ENCODE measurements at regions of chr3 and their contacts with region 1.

Region 1: GRCh38 chr3:174125267-174125824 is 727.8 kb downstream of the NLGN1 start:
- DNase-seq: peak; percentile 61
- H3K4me3 ChIP-seq: no peak overlapping the region
- H3K27ac ChIP-seq: no peak overlapping the region
- H3K4me1 ChIP-seq: peaks cover 10% of the 10 kb centered on the region
- H3K27me3 ChIP-seq: no peaks in the 10 kb centered on the region
- CTCF ChIP-seq: peak; percentile 80

Region 2: GRCh38 chr3:173253471-173253870 is 871.9 kb before region 1 on chr3:
- CTCF ChIA-PET with region 1: no interaction called
- POLR2A ChIA-PET with region 1: no interaction called
- intact Hi-C with region 1: no loop called
- DNase-seq: no peak
- H3K4me3 ChIP-seq: no peak overlapping the region
- H3K27ac ChIP-seq: no peak overlapping the region
- H3K4me1 ChIP-seq: peaks cover 20% of the 10 kb centered on the region
- H3K27me3 ChIP-seq: no peaks in the 10 kb centered on the region
- CTCF ChIP-seq: no peak

Region 3: DNA sequence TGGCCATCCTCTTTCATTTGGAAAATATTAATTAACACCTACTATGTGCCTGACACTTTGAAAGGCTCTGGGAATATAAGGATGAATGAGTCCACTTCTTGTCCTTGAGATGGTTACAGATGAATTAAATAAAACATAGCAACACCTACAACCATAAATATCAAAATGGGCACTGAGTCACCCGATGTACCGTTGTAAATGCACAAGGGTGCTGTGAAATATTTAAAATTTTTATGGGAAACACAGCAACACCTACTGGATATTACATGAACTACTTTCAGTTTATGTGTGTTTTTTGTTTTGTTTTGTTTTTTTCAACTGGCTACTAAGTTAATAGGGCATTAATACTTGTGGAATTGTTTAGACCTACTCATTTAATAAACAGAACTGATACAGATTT is 494.8 kb after region 1 on chr3:
- CTCF ChIA-PET with region 1: no interaction called
- POLR2A ChIA-PET with region 1: no interaction called
- intact Hi-C with region 1: loop called (anchors 10 kb)
- DNase-seq: peak; percentile 33
- H3K4me3 ChIP-seq: no peak overlapping the region
- H3K27ac ChIP-seq: no peak overlapping the region
- H3K4me1 ChIP-seq: no peaks in the 10 kb centered on the region
- H3K27me3 ChIP-seq: no peaks in the 10 kb centered on the region
- CTCF ChIP-seq: peak; percentile 38; the same call in 1 of the 2 replicates